Endothelial cell of umbilical vein (primary cell): ENCODE measurements at regions of chr10 and their contacts with region 1.

Region 1: GRCh38 chr10:72889391-72889831 is 4.1 kb upstream of the OIT3 start:
- DNase-seq: peak; percentile 12
- H3K4me3 ChIP-seq: no peak overlapping the region
- H3K27ac ChIP-seq: no peak overlapping the region
- H3K4me1 ChIP-seq: peaks cover 23% of the 10 kb centered on the region
- H3K27me3 ChIP-seq: no peaks in the 10 kb centered on the region
- CTCF ChIP-seq: no peak
- POLR2A ChIP-seq: no peak

Region 2: GRCh38 chr10:72625608-72626443 is 263.6 kb before region 1 on chr10 and contains the start of gene MICU1:
- CTCF ChIA-PET with region 1: no interaction called
- POLR2A ChIA-PET with region 1: no interaction called
- dilution Hi-C with region 1: no loop called
- intact Hi-C with region 1: loop called (anchors 1 kb)
- DNase-seq: peak; percentile 97
- H3K4me3 ChIP-seq: peak within 1 kb of the TSS; percentile 60 to 92 (median 83)
- H3K27ac ChIP-seq: peak within 1 kb of the TSS; percentile 61
- H3K4me1 ChIP-seq: peaks cover 11% of the 10 kb centered on the region
- H3K27me3 ChIP-seq: no peaks in the 10 kb centered on the region
- CTCF ChIP-seq: no peak
- POLR2A ChIP-seq: peak; percentile 82
- total RNA-seq, gene MICU1: 42.3 and 48.0 TPM in 2 replicates

Region 3: GRCh38 chr10:72784551-72785351 is 104.7 kb before region 1 on chr10:
- CTCF ChIA-PET with region 1: no interaction called
- POLR2A ChIA-PET with region 1: no interaction called
- dilution Hi-C with region 1: no loop called
- intact Hi-C with region 1: no loop called
- DNase-seq: peak; percentile 48
- H3K4me3 ChIP-seq: no peak overlapping the region
- H3K27ac ChIP-seq: no peak overlapping the region
- H3K4me1 ChIP-seq: no peaks in the 10 kb centered on the region
- H3K27me3 ChIP-seq: no peaks in the 10 kb centered on the region
- CTCF ChIP-seq: no peak
- POLR2A ChIP-seq: no peak

Region 4: DNA sequence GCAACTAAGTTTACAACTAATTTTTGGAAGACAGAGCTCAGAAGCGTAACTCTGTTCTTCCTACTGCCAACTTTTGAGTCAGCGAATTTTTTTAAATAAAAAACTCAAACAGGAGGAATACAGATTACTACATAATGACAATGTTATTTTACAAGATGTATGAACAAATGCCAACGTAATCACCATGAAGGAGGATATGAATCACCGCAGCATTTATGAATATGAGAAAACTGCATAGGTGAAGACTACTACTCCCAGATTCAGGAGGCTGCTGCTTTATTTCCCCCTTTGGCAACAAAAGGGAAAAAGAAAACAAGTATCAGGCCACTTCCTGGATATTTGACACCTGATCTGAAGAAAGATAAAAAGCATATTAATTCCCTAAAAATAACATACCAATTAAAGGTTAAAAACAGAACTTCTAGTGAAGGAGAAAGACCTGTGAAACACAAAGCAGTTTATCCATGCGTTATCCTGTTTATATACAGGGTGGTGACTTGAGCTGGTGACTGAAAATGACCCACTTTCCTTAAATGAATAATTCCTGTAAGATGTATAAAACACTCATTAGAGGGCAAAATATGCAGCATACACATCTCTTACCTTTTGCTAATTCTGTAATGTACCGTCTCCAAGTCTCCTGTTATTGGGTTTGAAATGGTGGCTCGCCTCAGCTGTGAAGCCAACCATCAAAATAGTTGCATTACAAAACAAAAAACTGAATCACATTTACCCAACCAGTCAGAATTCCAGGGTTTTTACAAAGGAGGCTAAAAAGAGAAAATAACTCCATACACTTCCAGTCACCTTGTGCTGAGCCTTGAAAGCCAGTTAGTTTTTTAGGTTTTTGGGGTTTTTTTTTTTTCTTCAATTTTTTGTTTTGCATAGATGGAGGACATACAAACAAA is 155.2 kb after region 1 on chr10:
- CTCF ChIA-PET with region 1: no interaction called
- POLR2A ChIA-PET with region 1: no interaction called
- dilution Hi-C with region 1: no loop called
- intact Hi-C with region 1: loop called (anchors 1 kb)
- DNase-seq: peak; percentile 96
- H3K4me3 ChIP-seq: peak overlapping the region in 1 of 3 experiments; percentile 35
- H3K27ac ChIP-seq: peak overlapping the region; percentile 96
- H3K4me1 ChIP-seq: peaks cover 16% of the 10 kb centered on the region
- H3K27me3 ChIP-seq: no peaks in the 10 kb centered on the region
- CTCF ChIP-seq: no peak
- POLR2A ChIP-seq: no peak